Ovary (tissue), 10 donors: ENCODE measurements at regions of chr4 and their contacts with region 1.

Region 1: GRCh38 chr4:15479089-15479912 is 9.6 kb downstream of the CC2D2A start:
- DNase-seq: peak; percentile 58 to 71 (median 61)
- H3K4me3 ChIP-seq: peak overlapping the region; percentile 36
- H3K27ac ChIP-seq: peak overlapping the region; percentile 39 to 62
- H3K4me1 ChIP-seq: no peaks in the 10 kb centered on the region
- H3K27me3 ChIP-seq: no peaks in the 10 kb centered on the region
- CTCF ChIP-seq: peak in 2 of 3 donors; percentile 52 to 69
- EP300 ChIP-seq: no peak
- POLR2A ChIP-seq: no peak

Region 2: GRCh38 chr4:15649914-15650545 is 170.7 kb after region 1 on chr4:
- intact Hi-C with region 1: loop called in 3 of 4 experiments (anchors 10 kb)
- DNase-seq: peak in 1 of 5 donors; percentile 30
- H3K4me3 ChIP-seq: no peak overlapping the region
- H3K27ac ChIP-seq: no peak overlapping the region
- H3K4me1 ChIP-seq: peaks cover 10% of the 10 kb centered on the region
- H3K27me3 ChIP-seq: no peaks in the 10 kb centered on the region
- CTCF ChIP-seq: peak in 2 of 3 donors; percentile 31 to 47
- EP300 ChIP-seq: no peak
- POLR2A ChIP-seq: no peak

Region 3: GRCh38 chr4:15655229-15656037 is 176.1 kb after region 1 on chr4 and contains the start of gene FBXL5:
- intact Hi-C with region 1: loop called in 2 of 4 experiments (anchors 10 kb)
- DNase-seq: peak; percentile 76 to 88 (median 82)
- H3K4me3 ChIP-seq: peak within 1 kb of the TSS; percentile 61
- H3K27ac ChIP-seq: peak within 1 kb of the TSS; percentile 98 to 100
- H3K4me1 ChIP-seq: peaks cover 5% of the 10 kb centered on the region
- H3K27me3 ChIP-seq: no peaks in the 10 kb centered on the region
- CTCF ChIP-seq: no peak
- EP300 ChIP-seq: no peak
- POLR2A ChIP-seq: peak; percentile 80
- total RNA-seq, gene FBXL5: 68.7 to 103 (median 90.4) TPM

Region 4: DNA sequence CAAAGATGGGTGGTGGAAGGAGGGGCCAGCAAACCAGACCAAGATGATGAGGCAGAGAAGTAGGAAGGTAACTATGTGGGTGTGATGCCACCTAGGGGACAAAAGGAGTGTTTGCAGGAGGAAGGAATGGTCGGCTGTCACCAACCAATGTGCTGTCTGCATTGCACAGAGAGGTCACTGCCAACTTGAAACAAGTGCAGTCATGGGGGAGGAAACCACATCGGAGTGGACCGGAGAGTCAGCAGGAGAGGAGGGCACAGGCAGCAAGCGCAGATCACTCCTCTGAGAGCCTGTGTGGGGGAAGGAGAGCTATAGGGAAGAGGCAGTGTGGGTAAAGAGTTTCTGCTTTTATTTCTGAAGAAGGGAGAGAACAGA is 522.2 kb after region 1 on chr4:
- intact Hi-C with region 1: loop called in 1 of 4 experiments (anchors 10 kb)
- DNase-seq: peak; percentile 24 to 48 (median 40)
- H3K4me3 ChIP-seq: no peak overlapping the region
- H3K27ac ChIP-seq: no peak overlapping the region
- H3K4me1 ChIP-seq: peaks cover 4% of the 10 kb centered on the region
- H3K27me3 ChIP-seq: no peaks in the 10 kb centered on the region
- CTCF ChIP-seq: peak in 2 of 3 donors; percentile 46 to 57
- EP300 ChIP-seq: no peak
- POLR2A ChIP-seq: no peak

Region 5: GRCh38 chr4:16264798-16265197 is 785.5 kb after region 1 on chr4:
- intact Hi-C with region 1: loop called in 1 of 4 experiments (anchors 10 kb)
- DNase-seq: no peak
- H3K4me3 ChIP-seq: no peak overlapping the region
- H3K27ac ChIP-seq: no peak overlapping the region
- H3K4me1 ChIP-seq: no peaks in the 10 kb centered on the region
- H3K27me3 ChIP-seq: no peaks in the 10 kb centered on the region
- CTCF ChIP-seq: peak in 2 of 3 donors; percentile 36 to 40
- EP300 ChIP-seq: no peak
- POLR2A ChIP-seq: no peak